Panc1 (cell line): ENCODE measurements at regions of chr6 and their contacts with region 1.

Region 1: DNA sequence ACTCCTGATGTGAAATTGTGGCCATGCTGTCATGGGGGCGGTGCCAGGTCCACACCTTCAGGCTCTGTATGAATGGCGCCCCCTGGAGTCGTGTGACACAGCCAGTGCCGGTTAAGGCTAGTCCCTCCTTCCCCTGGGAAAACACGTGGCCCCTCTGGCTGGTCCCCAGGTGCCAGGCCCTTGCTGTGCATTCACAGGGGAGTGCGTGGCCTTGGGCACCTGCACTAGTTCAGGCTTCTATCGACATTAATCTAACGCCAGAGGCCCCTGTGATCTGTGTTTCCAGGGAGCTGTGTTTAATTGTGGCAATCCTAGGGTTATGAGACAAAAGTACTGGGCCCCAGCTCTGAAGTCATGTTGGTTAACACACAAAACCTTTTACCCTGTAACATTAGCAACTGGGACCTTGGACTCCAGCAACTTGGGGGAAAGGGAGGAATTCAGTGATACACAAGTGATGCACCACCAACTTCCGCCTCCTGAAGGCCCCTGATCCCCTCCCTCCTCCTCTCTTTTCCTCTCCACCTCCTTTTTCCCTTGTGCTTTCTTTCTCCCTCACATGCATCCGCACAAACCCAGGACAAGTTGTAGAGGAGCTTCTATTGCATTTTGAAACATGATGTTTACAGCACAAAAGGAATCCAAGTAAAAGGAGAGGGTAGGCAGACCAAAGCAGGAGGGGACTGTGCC is 74.0 kb downstream of the SSR1 start:
- DNase-seq: no peak
- ATAC-seq: peak; percentile 87
- H3K4me3 ChIP-seq: no peak overlapping the region
- H3K27ac ChIP-seq: no peak overlapping the region
- H3K4me1 ChIP-seq: peaks cover 13% of the 10 kb centered on the region
- H3K27me3 ChIP-seq: no peaks in the 10 kb centered on the region
- CTCF ChIP-seq: peak; percentile 85

Region 2: GRCh38 chr6:6556738-6557505 is 682.1 kb before region 1 on chr6:
- CTCF ChIA-PET with region 1: no interaction called
- POLR2A ChIA-PET with region 1: no interaction called
- in situ Hi-C with region 1: no loop called
- intact Hi-C with region 1: loop called (anchors 5 kb)
- DNase-seq: no peak
- ATAC-seq: peak; percentile 75
- H3K4me3 ChIP-seq: no peak overlapping the region
- H3K27ac ChIP-seq: no peak overlapping the region
- H3K4me1 ChIP-seq: no peaks in the 10 kb centered on the region
- H3K27me3 ChIP-seq: peaks cover 18% of the 10 kb centered on the region; the same call in 1 of the 2 replicates
- CTCF ChIP-seq: peak; percentile 92

Region 3: GRCh38 chr6:6676910-6677441 is 562.1 kb before region 1 on chr6:
- CTCF ChIA-PET with region 1: interaction called, 4 read pairs
- POLR2A ChIA-PET with region 1: no interaction called
- in situ Hi-C with region 1: no loop called
- intact Hi-C with region 1: loop called (anchors 5 kb)
- DNase-seq: peak; percentile 66
- ATAC-seq: peak; percentile 84
- H3K4me3 ChIP-seq: no peak overlapping the region
- H3K27ac ChIP-seq: no peak overlapping the region
- H3K4me1 ChIP-seq: peaks cover 3% of the 10 kb centered on the region; the same call in 1 of the 2 replicates
- H3K27me3 ChIP-seq: no peaks in the 10 kb centered on the region
- CTCF ChIP-seq: peak; percentile 95

Region 4: DNA sequence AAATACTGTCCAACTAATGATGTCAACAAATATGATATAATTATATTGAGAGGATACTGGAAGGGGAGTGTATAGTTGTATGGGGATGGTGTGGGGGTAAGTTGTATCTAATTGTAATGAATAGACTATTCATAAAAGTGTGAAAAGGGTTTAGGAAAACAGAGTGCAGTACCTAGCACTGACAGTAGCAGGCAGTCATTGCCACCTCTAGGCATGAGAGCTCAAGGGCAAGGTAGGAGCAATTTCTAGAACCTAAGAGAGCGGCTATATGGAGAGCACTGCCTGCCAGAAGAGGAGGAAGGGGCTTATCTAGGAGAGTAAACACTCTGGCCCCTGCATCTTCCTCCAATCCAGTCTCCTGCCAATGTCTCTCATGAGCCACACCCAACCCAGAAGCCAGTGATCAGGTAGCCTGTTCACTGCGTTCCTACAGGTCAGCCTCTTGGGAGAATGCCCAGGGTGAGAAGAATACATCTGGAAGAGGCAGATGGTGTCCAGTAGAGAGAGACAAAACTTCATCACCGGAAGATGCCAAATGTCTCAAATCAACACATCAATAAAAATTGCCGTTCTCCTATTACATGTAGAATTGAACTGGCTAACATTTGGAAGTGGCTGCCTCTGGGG is 450.5 kb before region 1 on chr6:
- CTCF ChIA-PET with region 1: no interaction called
- POLR2A ChIA-PET with region 1: interaction called, 10 read pairs
- in situ Hi-C with region 1: no loop called
- intact Hi-C with region 1: no loop called
- DNase-seq: no peak
- ATAC-seq: no peak
- H3K4me3 ChIP-seq: no peak overlapping the region
- H3K27ac ChIP-seq: no peak overlapping the region
- H3K4me1 ChIP-seq: no peaks in the 10 kb centered on the region
- H3K27me3 ChIP-seq: no peaks in the 10 kb centered on the region
- CTCF ChIP-seq: peak; percentile 57

Region 5: DNA sequence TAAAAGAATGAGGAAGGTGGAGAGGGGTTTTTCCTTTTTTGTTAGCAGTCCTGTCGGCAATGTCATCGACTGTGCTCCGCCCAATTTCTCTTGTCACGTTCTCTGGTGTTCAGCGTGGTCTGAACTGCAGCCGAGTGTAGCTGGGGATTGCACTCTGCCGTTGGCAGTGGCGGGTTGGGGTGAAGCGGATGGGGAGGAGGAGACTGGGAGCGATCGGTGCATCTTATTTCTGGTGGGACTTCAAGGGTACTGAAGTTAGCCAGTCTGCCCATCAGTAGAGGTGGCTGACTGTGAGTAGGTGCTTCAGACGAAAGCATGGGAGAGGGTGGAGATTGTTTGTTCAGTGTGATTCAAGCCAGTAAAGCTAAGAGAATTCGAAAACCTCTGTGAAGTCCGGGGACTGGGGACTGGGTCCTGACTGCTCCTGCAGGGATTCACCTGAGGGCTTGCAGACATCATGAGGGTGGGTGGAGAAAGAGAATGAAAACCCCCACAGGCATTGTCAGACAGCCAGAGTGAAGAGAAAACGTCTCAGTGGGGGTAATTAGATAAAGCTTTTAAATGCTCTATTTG is 126.2 kb before region 1 on chr6:
- CTCF ChIA-PET with region 1: no interaction called
- POLR2A ChIA-PET with region 1: no interaction called
- in situ Hi-C with region 1: no loop called
- intact Hi-C with region 1: loop called (anchors 5 kb)
- DNase-seq: no peak
- ATAC-seq: peak; percentile 57
- H3K4me3 ChIP-seq: peak overlapping the region; percentile 15 to 23; a peak in 2 of 4 replicates
- H3K27ac ChIP-seq: peak overlapping the region; percentile 25
- H3K4me1 ChIP-seq: peaks cover 66% of the 10 kb centered on the region
- H3K27me3 ChIP-seq: no peaks in the 10 kb centered on the region
- CTCF ChIP-seq: no peak

Region 6: DNA sequence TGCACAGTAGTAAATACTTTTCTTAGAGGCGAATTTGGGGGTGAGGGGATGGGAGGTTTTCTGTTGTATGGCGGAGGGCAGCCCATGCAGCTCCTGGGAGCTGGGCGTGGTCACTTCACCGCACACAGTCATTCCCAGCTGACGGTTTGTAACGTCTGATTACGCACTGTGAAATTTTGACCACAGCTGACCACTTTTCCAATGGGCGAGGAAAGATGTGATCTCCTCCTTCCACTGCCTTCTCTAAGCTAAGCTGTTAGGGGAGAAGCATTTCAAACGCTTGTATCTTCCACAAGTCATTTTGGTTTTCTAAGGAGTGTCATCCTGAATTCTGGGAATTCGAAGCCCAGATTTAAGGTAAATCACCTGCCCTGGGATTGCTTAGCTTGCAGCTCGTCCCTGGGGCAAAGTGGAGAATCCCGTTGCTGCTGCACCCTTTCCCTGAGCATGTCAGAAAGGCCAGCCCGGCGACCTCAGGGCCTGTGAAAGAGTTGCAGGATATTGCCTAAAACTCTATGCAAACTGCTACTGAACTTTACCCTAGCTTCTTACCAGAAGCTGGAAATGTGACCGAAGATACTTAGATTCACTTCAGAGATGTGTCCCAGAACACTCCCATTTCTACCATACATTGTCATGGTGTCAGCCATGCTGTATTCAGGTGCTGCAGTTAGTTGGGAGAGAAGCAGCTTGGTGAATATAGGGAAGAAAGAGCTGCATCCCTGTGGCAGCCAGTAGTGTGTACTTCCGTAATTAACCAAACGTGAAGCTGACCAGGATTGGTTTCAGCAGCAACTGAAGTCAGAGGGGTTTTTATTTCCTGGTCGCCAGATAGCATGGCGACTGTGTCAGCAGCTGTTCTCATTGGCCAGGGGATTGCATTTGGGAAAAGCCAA is 72.4 kb before region 1 on chr6:
- CTCF ChIA-PET with region 1: no interaction called
- POLR2A ChIA-PET with region 1: no interaction called
- in situ Hi-C with region 1: no loop called
- intact Hi-C with region 1: no loop called
- DNase-seq: no peak
- ATAC-seq: no peak
- H3K4me3 ChIP-seq: no peak overlapping the region
- H3K27ac ChIP-seq: no peak overlapping the region
- H3K4me1 ChIP-seq: peaks cover 28% of the 10 kb centered on the region
- H3K27me3 ChIP-seq: no peaks in the 10 kb centered on the region
- CTCF ChIP-seq: no peak

Region 7: GRCh38 chr6:7261032-7261841 is 22.2 kb after region 1 on chr6:
- CTCF ChIA-PET with region 1: no interaction called
- POLR2A ChIA-PET with region 1: no interaction called
- in situ Hi-C with region 1: no loop called
- intact Hi-C with region 1: no loop called
- DNase-seq: no peak
- ATAC-seq: peak; percentile 99
- H3K4me3 ChIP-seq: peak overlapping the region; percentile 73 to 74
- H3K27ac ChIP-seq: peak overlapping the region; percentile 57
- H3K4me1 ChIP-seq: no peaks in the 10 kb centered on the region
- H3K27me3 ChIP-seq: no peaks in the 10 kb centered on the region
- CTCF ChIP-seq: no peak

Region 8: GRCh38 chr6:7479801-7480266 is 240.8 kb after region 1 on chr6:
- CTCF ChIA-PET with region 1: no interaction called
- POLR2A ChIA-PET with region 1: no interaction called
- in situ Hi-C with region 1: no loop called
- intact Hi-C with region 1: no loop called
- DNase-seq: no peak
- ATAC-seq: peak; percentile 62
- H3K4me3 ChIP-seq: peak overlapping the region; percentile 17 to 39
- H3K27ac ChIP-seq: no peak overlapping the region
- H3K4me1 ChIP-seq: no peaks in the 10 kb centered on the region
- H3K27me3 ChIP-seq: 0 out of 2 replicates have a peak, but pooled peaks cover 2% of the 10 kb centered on the region
- CTCF ChIP-seq: no peak